Dendritic cell treated with granulocyte-macrophage colony-stimulating factor and Interleukin-4, amounts not matched to agents 40 ng/mL and 50 ng/mL, for 4 days (primary cell): ENCODE measurements at regions of chr3 and their contacts with region 1.

Region 1: GRCh38 chr3:87167628-87168456 is 59.3 kb upstream of the CHMP2B start:
- H3K4me3 Mint-ChIP-seq: no peak overlapping the region
- H3K27ac Mint-ChIP-seq: no peak overlapping the region
- H3K4me1 Mint-ChIP-seq: no peaks in the 10 kb centered on the region
- H3K27me3 Mint-ChIP-seq: peaks cover 1% of the 10 kb centered on the region

Region 2: GRCh38 chr3:86702381-86702958 is 465.4 kb before region 1 on chr3:
- intact Hi-C with region 1: loop called (anchors 5 kb)
- H3K4me3 Mint-ChIP-seq: no peak overlapping the region
- H3K27ac Mint-ChIP-seq: no peak overlapping the region
- H3K4me1 Mint-ChIP-seq: no peaks in the 10 kb centered on the region
- H3K27me3 Mint-ChIP-seq: no peaks in the 10 kb centered on the region

Region 3: DNA sequence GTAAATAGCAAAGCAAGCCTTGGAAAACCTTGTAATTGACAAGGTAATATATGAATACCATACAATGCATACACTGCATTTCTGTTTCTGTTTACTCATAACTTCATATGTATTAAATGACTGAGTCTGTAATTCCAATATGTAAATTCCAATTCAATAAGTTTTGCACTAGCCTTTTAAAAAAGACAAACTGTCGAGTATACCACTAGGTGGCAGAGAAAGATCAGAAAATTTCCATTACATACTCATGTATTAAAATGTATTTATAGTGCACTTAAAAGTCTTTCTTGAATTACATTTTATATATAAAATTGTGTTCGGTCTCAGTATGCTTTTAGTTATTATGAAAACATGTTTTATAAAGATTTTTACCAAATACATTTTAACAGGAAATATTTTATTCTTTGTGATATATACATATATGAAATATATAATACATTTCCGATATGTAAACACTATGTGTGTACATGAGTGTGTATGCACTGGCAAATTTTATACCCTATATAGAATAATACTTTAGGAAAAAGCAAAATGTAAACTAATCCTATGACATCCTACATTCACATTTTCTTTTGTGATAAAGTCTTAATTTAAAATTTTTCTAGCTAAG is 393.7 kb before region 1 on chr3:
- intact Hi-C with region 1: loop called (anchors 5 kb)
- H3K4me3 Mint-ChIP-seq: no peak overlapping the region
- H3K27ac Mint-ChIP-seq: no peak overlapping the region
- H3K4me1 Mint-ChIP-seq: no peaks in the 10 kb centered on the region
- H3K27me3 Mint-ChIP-seq: no peaks in the 10 kb centered on the region

Region 4: GRCh38 chr3:86969500-86970189 is 198.2 kb before region 1 on chr3:
- intact Hi-C with region 1: loop called (anchors 1 kb)
- H3K4me3 Mint-ChIP-seq: no peak overlapping the region
- H3K27ac Mint-ChIP-seq: no peak overlapping the region
- H3K4me1 Mint-ChIP-seq: no peaks in the 10 kb centered on the region
- H3K27me3 Mint-ChIP-seq: peaks cover 2% of the 10 kb centered on the region

Region 5: DNA sequence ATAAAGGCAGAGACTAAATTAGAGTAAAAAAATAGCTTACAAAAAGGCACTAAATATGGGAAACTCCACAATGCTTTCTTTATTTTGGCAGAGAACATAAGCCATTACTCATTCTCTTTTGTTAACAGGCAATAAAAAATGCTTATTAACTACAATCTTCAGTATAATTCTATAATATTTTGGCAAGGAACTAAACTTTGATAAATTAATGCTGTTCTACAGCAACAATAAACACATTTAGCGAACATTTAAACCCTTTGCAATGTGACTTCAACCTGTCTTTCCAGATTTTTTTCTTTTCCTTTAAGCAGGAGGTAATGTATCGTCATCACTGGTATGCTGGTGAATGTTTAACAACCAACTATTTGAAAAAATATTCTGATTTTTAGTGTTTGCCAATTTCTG is 150.8 kb after region 1 on chr3:
- intact Hi-C with region 1: no loop called
- H3K4me3 Mint-ChIP-seq: no peak overlapping the region
- H3K27ac Mint-ChIP-seq: no peak overlapping the region
- H3K4me1 Mint-ChIP-seq: no peaks in the 10 kb centered on the region
- H3K27me3 Mint-ChIP-seq: no peaks in the 10 kb centered on the region